Testis (tissue), 5 donors: ENCODE measurements at regions of chr21 and their contacts with region 1.

Region 1: GRCh38 chr21:42818328-42818749 is 61.0 kb downstream of the WDR4 start:
- DNase-seq: peak; percentile 83
- H3K4me3 ChIP-seq: no peak overlapping the region
- H3K27ac ChIP-seq: no peak overlapping the region
- H3K4me1 ChIP-seq: no peaks in the 10 kb centered on the region
- H3K27me3 ChIP-seq: no peaks in the 10 kb centered on the region
- CTCF ChIP-seq: peak; percentile 82 to 88 (median 83)
- POLR2A ChIP-seq: no peak

Region 2: GRCh38 chr21:42593007-42593806 is 225.1 kb before region 1 on chr21:
- intact Hi-C with region 1: loop called (anchors 10 kb)
- DNase-seq: peak; percentile 77
- H3K4me3 ChIP-seq: no peak overlapping the region
- H3K27ac ChIP-seq: no peak overlapping the region
- H3K4me1 ChIP-seq: no peaks in the 10 kb centered on the region
- H3K27me3 ChIP-seq: no peaks in the 10 kb centered on the region
- CTCF ChIP-seq: peak in 2 of 3 experiments; percentile 54 to 72
- POLR2A ChIP-seq: no peak

Region 3: GRCh38 chr21:42652527-42653230 is 165.7 kb before region 1 on chr21:
- intact Hi-C with region 1: loop called (anchors 10 kb)
- DNase-seq: peak; percentile 73
- H3K4me3 ChIP-seq: peak overlapping the region; percentile 57 to 59
- H3K27ac ChIP-seq: peak overlapping the region in 1 of 2 donors; percentile 66
- H3K4me1 ChIP-seq: peaks cover 13% of the 10 kb centered on the region
- H3K27me3 ChIP-seq: no peaks in the 10 kb centered on the region
- CTCF ChIP-seq: peak; percentile 45 to 62 (median 47)
- POLR2A ChIP-seq: no peak